Thyroid gland (tissue), 4 donors: ENCODE measurements at regions of chr11 and their contacts with region 1.

Region 1: GRCh38 chr11:67507864-67508485 is at the start of gene CDK2AP2:
- DNase-seq: peak; percentile 100
- H3K4me3 ChIP-seq: peak within 1 kb of the TSS; percentile 53 to 83 (median 56)
- H3K27ac ChIP-seq: peak within 1 kb of the TSS; percentile 93 to 99 (median 95)
- H3K4me1 ChIP-seq: peaks cover 30 to 35% of the 10 kb centered on the region in 2 donors
- H3K27me3 ChIP-seq: no peaks in the 10 kb centered on the region
- CTCF ChIP-seq: no peak
- POLR2A ChIP-seq: peak; percentile 83 to 96
- total RNA-seq, gene CDK2AP2: 90.0 to 240 (median 148) TPM

Region 2: GRCh38 chr11:67391304-67392132 is 116.5 kb before region 1 on chr11 and contains the start of gene RAD9A:
- intact Hi-C with region 1: loop called (anchors 5 kb)
- DNase-seq: peak; percentile 96 to 97
- H3K4me3 ChIP-seq: peak within 1 kb of the TSS; percentile 65 to 88 (median 77)
- H3K27ac ChIP-seq: peak within 1 kb of the TSS; percentile 7 to 79 (median 66)
- H3K4me1 ChIP-seq: peaks cover 4 to 20% of the 10 kb centered on the region in 2 donors
- H3K27me3 ChIP-seq: no peaks in the 10 kb centered on the region
- CTCF ChIP-seq: peak in 1 of 6 experiments; percentile 30
- POLR2A ChIP-seq: peak in 1 of 2 donors; percentile 73
- total RNA-seq, gene RAD9A: 22.7 to 38.0 (median 31.0) TPM

Region 3: DNA sequence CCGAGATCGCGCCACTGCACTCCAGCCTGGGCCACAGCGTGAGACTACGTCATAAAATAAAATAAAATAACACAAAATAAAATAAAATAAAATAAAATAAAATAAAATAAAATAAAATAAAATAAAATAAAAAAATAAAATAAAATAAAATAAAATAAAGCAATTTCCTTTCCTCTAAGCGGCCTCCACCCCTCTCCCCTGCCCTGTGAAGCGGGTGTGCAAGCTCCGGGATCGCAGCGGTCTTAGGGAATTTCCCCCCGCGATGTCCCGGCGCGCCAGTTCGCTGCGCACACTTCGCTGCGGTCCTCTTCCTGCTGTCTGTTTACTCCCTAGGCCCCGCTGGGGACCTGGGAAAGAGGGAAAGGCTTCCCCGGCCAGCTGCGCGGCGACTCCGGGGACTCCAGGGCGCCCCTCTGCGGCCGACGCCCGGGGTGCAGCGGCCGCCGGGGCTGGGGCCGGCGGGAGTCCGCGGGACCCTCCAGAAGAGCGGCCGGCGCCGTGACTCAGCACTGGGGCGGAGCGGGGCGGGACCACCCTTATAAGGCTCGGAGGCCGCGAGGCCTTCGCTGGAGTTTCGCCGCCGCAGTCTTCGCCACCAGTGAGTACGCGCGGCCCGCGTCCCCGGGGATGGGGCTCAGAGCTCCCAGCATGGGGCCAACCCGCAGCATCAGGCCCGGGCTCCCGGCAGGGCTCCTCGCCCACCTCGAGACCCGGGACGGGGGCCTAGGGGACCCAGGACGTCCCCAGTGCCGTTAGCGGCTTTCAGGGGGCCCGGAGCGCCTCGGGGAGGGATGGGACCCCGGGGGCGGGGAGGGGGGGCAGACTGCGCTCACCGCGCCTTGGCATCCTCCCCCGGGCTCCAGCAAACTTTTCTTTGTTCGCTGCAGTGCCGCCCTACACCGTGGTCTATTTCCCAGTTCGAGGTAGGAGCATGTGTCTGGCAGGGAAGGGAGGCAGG is 75.6 kb after region 1 on chr11 and contains the start of gene GSTP1:
- intact Hi-C with region 1: no loop called
- DNase-seq: peak; percentile 91
- H3K4me3 ChIP-seq: peak within 1 kb of the TSS in 2 of 3 donors; percentile 68 to 84
- H3K27ac ChIP-seq: peak within 1 kb of the TSS; percentile 95 to 100 (median 99)
- H3K4me1 ChIP-seq: peaks cover 31 to 36% of the 10 kb centered on the region in 2 donors
- H3K27me3 ChIP-seq: no peaks in the 10 kb centered on the region
- CTCF ChIP-seq: peak; percentile 42 to 95 (median 76)
- POLR2A ChIP-seq: peak; percentile 87 to 96
- total RNA-seq, gene GSTP1: 877 to 4,013 (median 1,716) TPM